PC-3 (cell line): ENCODE measurements at regions of chr12 and their contacts with region 1.

Region 1: DNA sequence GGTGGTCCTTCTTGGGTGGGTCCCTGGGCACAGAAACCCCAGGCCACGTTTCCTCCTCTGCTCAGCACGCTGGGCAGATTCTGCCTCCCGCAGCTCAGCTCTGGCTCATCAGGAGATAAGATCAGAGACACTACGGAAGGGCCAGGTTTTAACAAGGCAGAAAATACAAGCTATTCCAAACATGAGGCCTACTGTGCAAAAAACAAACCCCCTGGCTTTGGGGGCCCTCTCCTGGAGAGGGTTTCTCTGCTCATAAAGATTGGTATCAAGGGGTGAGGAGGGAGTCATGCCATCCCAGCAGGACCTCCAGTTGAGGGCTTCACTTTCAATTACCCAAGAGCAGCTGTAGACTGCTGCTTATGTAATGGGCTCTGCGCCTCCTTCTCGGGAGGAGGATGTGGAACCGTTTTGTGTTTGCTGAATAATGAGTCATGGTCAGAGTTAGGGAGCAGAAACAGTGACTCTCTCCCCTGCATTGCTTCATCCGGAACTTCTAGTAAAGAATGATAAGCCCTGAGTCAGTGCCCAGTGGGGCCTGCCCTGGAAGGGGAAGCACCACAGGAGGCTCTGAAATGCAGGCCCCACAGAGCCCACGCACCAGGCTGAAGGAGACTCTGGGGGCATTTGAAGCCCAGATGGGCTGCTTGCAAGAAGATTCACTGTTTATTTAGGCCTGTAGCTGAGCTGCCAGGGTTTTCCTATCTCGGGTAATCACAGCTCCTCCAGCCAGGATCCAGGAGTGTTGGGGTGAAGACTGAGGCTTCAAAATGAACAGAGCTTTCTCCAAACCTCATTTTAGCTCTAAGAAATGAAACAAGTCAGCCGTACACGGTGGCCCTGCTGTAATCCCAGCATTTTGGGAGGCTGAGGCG is 79.3 kb downstream of the SSPN start:
- DNase-seq: peak; percentile 100
- ATAC-seq: peak; percentile 92
- H3K4me3 ChIP-seq: peak overlapping the region; percentile 5; the same call in 1 of the 2 replicates
- H3K27ac ChIP-seq: peak overlapping the region; percentile 94
- H3K4me1 ChIP-seq: peaks cover 57% of the 10 kb centered on the region
- H3K27me3 ChIP-seq: no peaks in the 10 kb centered on the region
- CTCF ChIP-seq: peak; percentile 83

Region 2: GRCh38 chr12:25644979-25645378 is 629.7 kb before region 1 on chr12:
- CTCF ChIA-PET with region 1: no interaction called
- POLR2A ChIA-PET with region 1: no interaction called
- intact Hi-C with region 1: no loop called
- DNase-seq: no peak
- ATAC-seq: no peak
- H3K4me3 ChIP-seq: no peak overlapping the region
- H3K27ac ChIP-seq: no peak overlapping the region
- H3K4me1 ChIP-seq: peaks cover 11% of the 10 kb centered on the region; the same call in 1 of the 2 replicates
- H3K27me3 ChIP-seq: no peaks in the 10 kb centered on the region
- CTCF ChIP-seq: no peak

Region 3: DNA sequence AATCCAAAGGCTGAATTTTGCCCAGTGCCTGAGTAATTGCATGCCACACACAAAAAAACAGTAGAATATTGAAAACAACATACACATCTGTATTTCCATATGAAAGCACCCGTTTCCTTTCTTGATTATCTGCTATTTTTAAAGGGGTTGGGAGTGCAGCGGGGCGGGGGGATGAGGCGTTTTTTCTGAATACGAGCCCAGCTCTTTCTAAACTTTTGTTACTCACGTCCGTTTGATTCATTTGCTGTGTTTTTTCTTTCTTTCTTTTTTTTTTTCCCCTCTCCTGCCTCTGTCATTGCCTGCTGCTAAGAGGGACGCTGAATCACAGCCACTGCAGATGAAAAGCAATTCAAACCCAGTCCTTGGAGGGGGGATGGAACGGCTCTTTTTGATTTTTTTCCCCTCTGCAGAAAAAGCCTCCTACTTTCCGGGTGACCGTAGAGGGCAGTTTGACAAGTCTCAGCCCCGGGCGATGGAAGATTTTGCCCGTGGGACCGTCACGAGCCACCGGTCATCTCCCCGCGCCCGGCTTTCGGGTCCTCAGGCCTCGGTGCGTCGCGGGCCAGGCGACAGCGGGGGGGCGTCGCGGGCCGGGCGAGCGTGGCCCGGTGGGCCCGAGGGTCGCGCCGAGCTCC is 316.8 kb before region 1 on chr12:
- CTCF ChIA-PET with region 1: no interaction called
- POLR2A ChIA-PET with region 1: no interaction called
- intact Hi-C with region 1: no loop called
- DNase-seq: peak; percentile 88
- ATAC-seq: peak; percentile 28
- H3K4me3 ChIP-seq: peak overlapping the region; percentile 83
- H3K27ac ChIP-seq: peak overlapping the region; percentile 96
- H3K4me1 ChIP-seq: peaks cover 26% of the 10 kb centered on the region
- H3K27me3 ChIP-seq: no peaks in the 10 kb centered on the region
- CTCF ChIP-seq: no peak

Region 4: GRCh38 chr12:26097046-26097878 is 177.4 kb before region 1 on chr12:
- CTCF ChIA-PET with region 1: interaction called, 4 read pairs
- POLR2A ChIA-PET with region 1: no interaction called
- intact Hi-C with region 1: loop called (anchors 1 kb)
- DNase-seq: peak; percentile 93
- ATAC-seq: peak; percentile 94
- H3K4me3 ChIP-seq: 0 out of 2 replicates have a peak overlapping the region, but pooled peaks have one; percentile 8
- H3K27ac ChIP-seq: peak overlapping the region; percentile 36
- H3K4me1 ChIP-seq: peaks cover 50% of the 10 kb centered on the region
- H3K27me3 ChIP-seq: no peaks in the 10 kb centered on the region
- CTCF ChIP-seq: peak; percentile 99

Region 5: GRCh38 chr12:26153421-26154154 is 121.1 kb before region 1 on chr12:
- CTCF ChIA-PET with region 1: interaction called, 6 read pairs
- POLR2A ChIA-PET with region 1: interaction called, 10 read pairs
- intact Hi-C with region 1: loop called (anchors 1 kb)
- DNase-seq: peak; percentile 99
- ATAC-seq: peak; percentile 95
- H3K4me3 ChIP-seq: peak overlapping the region; percentile 22
- H3K27ac ChIP-seq: peak overlapping the region; percentile 88
- H3K4me1 ChIP-seq: peaks cover 37% of the 10 kb centered on the region
- H3K27me3 ChIP-seq: no peaks in the 10 kb centered on the region
- CTCF ChIP-seq: peak; percentile 46

Region 6: GRCh38 chr12:26195641-26196420 is 78.8 kb before region 1 on chr12:
- CTCF ChIA-PET with region 1: interaction called, 6 read pairs
- POLR2A ChIA-PET with region 1: no interaction called
- intact Hi-C with region 1: loop called (anchors 1 kb)
- DNase-seq: peak; percentile 74
- ATAC-seq: peak; percentile 86
- H3K4me3 ChIP-seq: peak overlapping the region; percentile 69
- H3K27ac ChIP-seq: peak overlapping the region; percentile 50
- H3K4me1 ChIP-seq: peaks cover 36% of the 10 kb centered on the region
- H3K27me3 ChIP-seq: no peaks in the 10 kb centered on the region
- CTCF ChIP-seq: 0 out of 2 replicates have a peak, but pooled peaks have one; percentile 12

Region 7: GRCh38 chr12:26402648-26403047 is 128.0 kb after region 1 on chr12:
- CTCF ChIA-PET with region 1: interaction called, 4 read pairs
- POLR2A ChIA-PET with region 1: no interaction called
- intact Hi-C with region 1: loop called (anchors 1 kb)
- DNase-seq: peak; percentile 100
- ATAC-seq: peak; percentile 98
- H3K4me3 ChIP-seq: peak overlapping the region; percentile 24
- H3K27ac ChIP-seq: peak overlapping the region; percentile 91
- H3K4me1 ChIP-seq: peaks cover 31% of the 10 kb centered on the region
- H3K27me3 ChIP-seq: no peaks in the 10 kb centered on the region
- CTCF ChIP-seq: peak; percentile 46

Region 8: GRCh38 chr12:26629864-26630263 is 355.2 kb after region 1 on chr12:
- CTCF ChIA-PET with region 1: no interaction called
- POLR2A ChIA-PET with region 1: no interaction called
- intact Hi-C with region 1: loop called (anchors 10 kb)
- DNase-seq: peak; percentile 41
- ATAC-seq: peak; percentile 28; the same call in 1 of the 2 replicates
- H3K4me3 ChIP-seq: 0 out of 2 replicates have a peak overlapping the region, but pooled peaks have one; percentile 8
- H3K27ac ChIP-seq: peak overlapping the region; percentile 46
- H3K4me1 ChIP-seq: peaks cover 55% of the 10 kb centered on the region
- H3K27me3 ChIP-seq: no peaks in the 10 kb centered on the region
- CTCF ChIP-seq: peak; percentile 79

Region 9: DNA sequence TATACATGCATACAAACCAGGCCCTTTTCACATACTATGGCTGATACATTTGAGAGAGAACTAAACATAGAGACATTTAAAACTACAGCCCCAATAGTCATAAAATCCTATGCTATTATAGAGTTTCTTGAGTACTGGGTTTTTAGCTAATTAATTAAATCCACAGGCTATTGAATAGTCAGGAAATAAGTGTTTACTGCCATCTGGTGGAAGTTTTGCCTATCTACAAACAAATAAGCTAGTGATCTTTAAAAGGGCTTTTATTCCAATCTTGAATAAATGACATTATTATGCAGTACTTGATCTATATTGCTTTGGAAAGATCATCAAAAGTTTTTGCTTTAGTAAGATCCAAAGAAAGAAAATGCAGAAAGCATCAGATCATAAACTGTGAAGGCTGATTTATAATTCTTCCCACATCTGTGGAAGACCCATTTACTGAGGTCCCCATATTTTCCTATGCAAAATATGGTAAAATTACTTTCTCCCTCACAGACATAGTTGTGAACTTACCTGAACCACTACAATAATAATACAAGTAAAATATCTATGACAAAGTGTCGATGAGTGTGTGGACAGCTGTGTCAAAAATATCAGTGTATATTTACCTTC is 427.0 kb after region 1 on chr12:
- CTCF ChIA-PET with region 1: interaction called, 4 read pairs
- POLR2A ChIA-PET with region 1: no interaction called
- intact Hi-C with region 1: loop called (anchors 5 kb)
- DNase-seq: peak; percentile 80
- ATAC-seq: no peak
- H3K4me3 ChIP-seq: no peak overlapping the region
- H3K27ac ChIP-seq: no peak overlapping the region
- H3K4me1 ChIP-seq: peaks cover 29% of the 10 kb centered on the region
- H3K27me3 ChIP-seq: no peaks in the 10 kb centered on the region
- CTCF ChIP-seq: peak; percentile 95